ENCODE measurements at regions of chr5 and their contacts with region 1.

Region 1: DNA sequence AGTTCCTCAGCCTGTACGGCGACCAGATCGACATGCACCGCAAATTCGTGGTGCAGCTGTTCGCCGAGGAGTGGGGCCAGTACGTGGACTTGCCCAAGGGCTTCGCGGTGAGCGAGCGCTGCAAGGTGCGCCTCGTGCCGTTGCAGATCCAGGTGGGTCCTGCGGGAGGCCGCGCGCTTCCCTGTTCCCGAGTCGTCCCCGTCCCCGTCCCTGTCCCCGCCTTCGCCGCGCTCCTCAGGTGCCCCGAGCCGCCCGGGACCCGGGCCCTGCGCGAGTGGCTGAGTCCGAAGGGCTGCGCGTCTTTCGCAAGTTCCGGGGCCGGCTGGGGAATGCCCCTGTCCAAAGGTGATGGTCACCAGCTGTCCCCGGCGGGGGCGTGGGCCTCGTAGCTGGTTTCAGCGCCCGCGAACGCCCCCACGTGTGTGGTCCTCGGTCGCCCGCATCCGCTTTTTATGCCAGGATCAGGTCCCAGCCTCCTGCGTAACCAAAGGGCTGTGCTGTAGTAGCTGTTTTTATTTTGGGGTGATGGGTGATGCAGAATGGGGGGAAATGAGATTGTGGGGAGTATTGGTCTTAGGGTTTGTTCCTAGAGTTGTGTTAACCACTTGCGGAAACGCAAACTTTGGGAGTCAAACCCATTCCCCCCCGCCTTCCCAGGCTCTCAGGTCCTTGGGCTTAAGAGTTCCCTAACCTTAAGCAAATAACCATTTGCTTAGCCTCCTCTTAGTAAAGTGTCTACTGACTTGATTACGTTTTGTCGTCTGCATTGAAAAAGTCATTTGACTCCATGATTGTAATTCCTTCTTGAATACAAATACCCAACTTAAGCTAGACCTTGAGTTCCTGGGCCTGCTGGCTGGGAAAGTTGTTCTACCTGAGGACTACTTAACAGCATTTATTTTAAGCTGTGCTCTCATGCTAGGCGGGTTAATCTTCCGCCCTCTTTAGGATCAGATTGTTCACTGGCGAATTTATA is 663 bp downstream of the ISOC1 start:
- DNase-seq: peak; percentile 78
- ATAC-seq: peak; percentile 62 to 70

Region 2: DNA sequence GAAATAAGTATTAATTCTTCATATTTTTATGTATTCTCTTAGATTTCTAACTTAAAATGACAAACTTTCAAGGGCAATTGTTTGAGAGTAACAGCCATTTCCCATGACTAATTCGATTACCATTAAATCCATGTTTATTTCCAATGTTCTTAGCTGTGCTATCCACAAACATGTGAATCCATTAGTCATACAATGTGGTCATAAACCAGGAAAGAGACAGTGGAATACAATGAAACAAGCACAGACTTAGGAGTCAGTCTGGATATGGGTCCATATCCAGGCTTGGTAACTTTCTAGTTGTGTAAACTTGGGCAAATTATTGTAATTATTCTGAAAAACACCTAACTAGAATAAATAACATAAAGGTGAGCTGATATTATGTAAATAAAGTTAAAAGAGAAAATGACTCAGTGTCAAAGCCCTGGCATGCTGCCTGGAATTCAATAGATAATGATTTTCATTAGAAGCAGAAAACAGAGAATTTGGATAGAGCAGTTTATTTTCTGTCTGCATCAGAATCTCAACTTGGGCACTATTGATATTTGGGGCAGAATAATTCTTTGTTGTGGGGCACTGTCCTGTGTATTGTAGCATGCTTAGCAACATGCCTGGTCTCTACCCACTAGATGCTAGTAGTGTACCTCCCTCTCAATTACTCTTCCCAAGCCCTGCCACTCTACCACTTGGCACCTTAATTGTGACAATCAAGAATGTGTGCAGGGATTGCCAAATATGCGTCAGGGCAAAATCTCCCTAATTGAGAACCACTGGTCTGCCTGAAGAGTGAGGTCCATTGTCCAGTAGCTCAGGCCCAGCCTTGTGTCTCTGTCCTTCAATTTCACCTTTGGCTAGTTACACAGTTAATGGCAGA is 174.6 kb before region 1 on chr5:
- intact Hi-C with region 1: loop called in 1 of 2 experiments (anchors 5 kb)
- DNase-seq: no peak
- ATAC-seq: peak; percentile 89 to 93

Region 3: GRCh38 chr5:129244478-129244877 is 149.3 kb after region 1 on chr5:
- intact Hi-C with region 1: no loop called
- DNase-seq: no peak
- ATAC-seq: peak in 1 of 2 donors; percentile 92

Measured in left cardiac atrium (tissue), 4 donors.